ENCODE measurements at regions of chr5 and their contacts with region 1.

Region 1: DNA sequence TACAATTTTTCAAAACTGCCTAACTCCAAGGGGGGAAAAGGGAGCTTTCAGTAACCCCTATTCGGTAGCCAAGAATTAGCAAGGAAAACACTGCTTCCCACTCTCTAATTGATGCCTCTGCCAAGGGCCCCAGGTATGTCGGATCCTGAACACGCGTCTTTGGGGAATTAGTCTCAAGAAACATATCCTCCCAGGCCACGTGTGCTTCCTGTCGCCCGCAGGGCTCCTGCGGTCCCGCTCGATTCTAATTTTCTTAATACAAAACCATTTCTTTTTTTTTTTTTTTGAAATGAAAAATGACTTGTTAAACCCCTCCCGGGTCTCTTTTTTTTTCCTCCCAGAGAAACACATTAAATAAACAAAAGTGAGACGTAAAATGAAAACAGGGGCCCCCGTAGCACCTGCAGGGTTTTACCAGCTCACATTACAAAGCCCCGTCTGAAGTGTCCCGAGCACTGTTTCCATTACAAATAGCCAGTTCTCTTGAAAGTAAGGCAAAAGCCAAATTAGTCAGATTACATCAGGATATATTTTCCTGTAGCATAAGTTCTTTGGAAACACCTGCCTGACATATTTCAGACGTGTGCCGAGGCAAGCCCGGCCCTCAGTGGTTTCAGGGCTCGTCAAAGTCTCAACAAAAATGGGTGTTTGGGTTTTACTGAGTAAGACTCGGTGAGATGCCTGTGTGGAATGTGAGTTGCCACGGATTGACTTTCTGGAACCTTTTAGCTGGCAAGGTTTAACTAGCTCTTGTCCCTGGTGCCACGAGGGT is 21.5 kb downstream of the SMIM23 start:
- DNase-seq: no peak
- H3K4me3 Mint-ChIP-seq: no peak overlapping the region
- H3K27ac Mint-ChIP-seq: no peak overlapping the region
- H3K4me1 Mint-ChIP-seq: no peaks in the 10 kb centered on the region
- H3K27me3 Mint-ChIP-seq: peaks cover 16% of the 10 kb centered on the region

Region 2: GRCh38 chr5:171840711-171841522 is 33.8 kb after region 1 on chr5:
- intact Hi-C with region 1: loop called (anchors 1 kb)
- DNase-seq: no peak
- H3K4me3 Mint-ChIP-seq: no peak overlapping the region
- H3K27ac Mint-ChIP-seq: no peak overlapping the region
- H3K4me1 Mint-ChIP-seq: no peaks in the 10 kb centered on the region
- H3K27me3 Mint-ChIP-seq: no peaks in the 10 kb centered on the region

Region 3: GRCh38 chr5:172086194-172087019 is 279.2 kb after region 1 on chr5:
- intact Hi-C with region 1: no loop called
- DNase-seq: no peak
- H3K4me3 Mint-ChIP-seq: no peak overlapping the region
- H3K27ac Mint-ChIP-seq: peak overlapping the region; percentile 68
- H3K4me1 Mint-ChIP-seq: no peaks in the 10 kb centered on the region
- H3K27me3 Mint-ChIP-seq: no peaks in the 10 kb centered on the region